ENCODE measurements at regions of chr4 and their contacts with region 1.

Region 1: DNA sequence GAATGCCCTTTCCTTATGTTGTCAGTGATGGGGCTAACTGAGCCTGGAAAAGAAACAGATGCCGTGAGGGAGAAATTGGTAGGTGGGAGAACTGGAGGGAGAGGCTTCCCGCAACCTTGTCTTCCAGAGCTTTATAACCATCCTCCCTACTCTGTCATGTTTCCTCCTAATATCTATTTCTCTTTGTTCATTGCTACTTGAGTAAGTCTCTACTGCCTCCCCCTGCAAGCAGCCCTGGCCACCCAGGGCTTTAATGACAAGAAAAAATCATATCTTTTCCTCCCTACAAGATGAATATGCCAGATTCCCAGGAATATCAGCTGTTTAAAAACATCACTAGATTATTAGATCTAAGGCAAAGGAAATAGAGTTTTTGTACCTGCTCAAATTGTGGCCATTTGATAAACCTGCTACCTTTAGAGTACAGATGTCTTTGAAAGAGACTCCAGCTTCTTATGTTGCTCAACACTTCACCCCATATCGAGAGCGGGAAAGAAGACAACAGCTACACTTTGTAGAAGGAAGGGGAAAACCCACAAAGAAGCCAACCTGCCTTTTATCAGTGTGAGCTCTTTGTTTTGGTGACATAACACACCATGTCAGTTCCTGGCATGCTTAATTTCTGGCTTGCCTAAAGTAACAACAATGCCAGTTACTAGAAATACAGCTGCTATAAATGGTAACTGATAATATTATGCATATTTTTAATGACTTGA is 186.6 kb upstream of the LEF1 start:
- DNase-seq: no peak
- ATAC-seq: peak; percentile 55 to 64 (median 59)
- H3K4me3 ChIP-seq: no peak overlapping the region
- H3K27ac ChIP-seq: no peak overlapping the region
- H3K4me1 ChIP-seq: peaks cover 2 to 33% (median 15%) of the 10 kb centered on the region in 12 donors
- H3K27me3 ChIP-seq: peaks cover 0 to 15% (median 0%) of the 10 kb centered on the region in 9 donors
- CTCF ChIP-seq: no peak
- POLR2A ChIP-seq: no peak

Region 2: DNA sequence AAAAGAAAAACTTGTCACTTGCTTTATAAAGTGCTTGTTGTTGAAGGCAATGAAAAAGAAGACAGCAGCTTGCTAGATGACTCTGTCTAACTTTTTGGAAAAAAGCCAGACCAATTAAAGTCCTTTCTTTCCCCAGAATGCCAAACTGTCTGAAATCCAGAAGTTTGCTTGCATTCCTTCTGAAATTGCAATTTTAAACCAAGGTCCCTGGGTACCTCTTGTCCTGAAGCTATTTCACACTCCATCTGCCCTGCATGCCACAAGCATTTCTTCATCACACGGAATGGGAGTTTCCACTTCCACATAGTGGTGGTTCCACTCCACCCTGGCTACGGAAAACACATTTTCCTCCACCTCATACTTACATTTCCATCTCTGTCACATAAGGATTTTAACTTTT is 736.3 kb before region 1 on chr4:
- intact Hi-C with region 1: no loop called
- DNase-seq: no peak
- ATAC-seq: peak in 2 of 4 donors; percentile 71 to 81
- H3K4me3 ChIP-seq: no peak overlapping the region
- H3K27ac ChIP-seq: peak overlapping the region in 2 of 12 donors; percentile 6 to 10
- H3K4me1 ChIP-seq: peaks cover 0 to 13% (median 0%) of the 10 kb centered on the region in 12 donors
- H3K27me3 ChIP-seq: no peaks in the 10 kb centered on the region
- CTCF ChIP-seq: no peak
- POLR2A ChIP-seq: no peak

Region 3: DNA sequence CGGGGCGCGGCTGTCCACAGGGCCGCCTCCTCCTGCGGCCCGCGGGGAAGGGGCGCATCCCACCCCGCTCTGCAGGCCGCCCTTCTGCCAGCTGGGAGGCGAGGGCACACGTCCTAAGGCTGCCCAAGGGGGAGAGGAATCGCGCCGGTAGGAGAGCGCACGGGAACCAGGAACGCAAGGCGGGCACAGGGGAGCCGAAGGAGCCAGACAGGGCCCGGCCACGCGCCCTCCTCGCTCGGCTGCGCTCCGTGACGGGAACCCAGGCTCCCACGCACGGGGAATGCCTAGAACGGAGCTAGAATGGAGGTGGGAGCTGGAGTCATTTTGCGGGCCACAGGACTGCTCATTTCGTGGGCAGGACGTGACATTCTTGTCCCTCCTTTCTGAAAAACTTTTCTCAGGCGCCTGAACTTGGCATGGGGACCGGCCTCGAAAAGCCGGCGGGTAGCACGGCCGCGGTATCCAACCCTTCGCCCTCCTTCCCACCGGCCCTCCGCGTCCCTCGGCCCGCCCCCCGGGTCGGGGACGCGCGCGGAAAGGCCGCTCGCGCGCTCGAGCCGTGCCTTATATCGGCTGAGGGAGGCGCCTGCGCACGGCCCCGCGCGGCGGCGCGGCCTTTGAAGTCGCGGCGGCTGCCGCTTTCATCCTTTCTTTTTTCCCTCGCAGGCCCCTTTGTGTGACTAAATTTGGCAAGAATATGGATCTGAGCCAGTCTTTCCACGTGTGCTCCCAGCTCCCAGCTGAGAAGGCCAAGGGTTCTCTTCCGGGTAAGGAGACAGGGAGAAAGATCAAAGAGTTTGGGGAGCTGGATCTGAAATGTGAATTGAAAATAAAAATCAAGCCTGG is 182.4 kb before region 1 on chr4:
- intact Hi-C with region 1: loop called in 2 of 10 experiments (anchors 10 kb)
- DNase-seq: peak; percentile 32 to 67 (median 42)
- ATAC-seq: peak in 3 of 4 donors; percentile 76 to 86 (median 84)
- H3K4me3 ChIP-seq: peak overlapping the region; percentile 32 to 70 (median 58)
- H3K27ac ChIP-seq: peak overlapping the region in 6 of 12 donors; percentile 17 to 70 (median 54)
- H3K4me1 ChIP-seq: peaks cover 0 to 33% (median 15%) of the 10 kb centered on the region in 12 donors
- H3K27me3 ChIP-seq: peaks cover 12 to 73% (median 59%) of the 10 kb centered on the region in 9 donors
- CTCF ChIP-seq: no peak
- POLR2A ChIP-seq: no peak

Region 4: GRCh38 chr4:108560616-108561015 is 205.3 kb after region 1 on chr4:
- intact Hi-C with region 1: loop called in 1 of 10 experiments (anchors 10 kb)
- DNase-seq: peak in 3 of 5 donors; percentile 44 to 63 (median 51)
- ATAC-seq: peak; percentile 58 to 98 (median 94)
- H3K4me3 ChIP-seq: no peak overlapping the region
- H3K27ac ChIP-seq: peak overlapping the region in 11 of 12 donors; percentile 24 to 87 (median 69)
- H3K4me1 ChIP-seq: peaks cover 0 to 26% (median 8%) of the 10 kb centered on the region in 12 donors
- H3K27me3 ChIP-seq: no peaks in the 10 kb centered on the region
- CTCF ChIP-seq: no peak
- POLR2A ChIP-seq: no peak

Measured in heart left ventricle (tissue), 16 donors.